ENCODE measurements at regions of chr14 and their contacts with region 1.

Region 1: GRCh38 chr14:91228112-91229004 is 16.1 kb downstream of the GPR68 start:
- DNase-seq: peak; percentile 97
- H3K4me3 Mint-ChIP-seq: peak overlapping the region; percentile 58
- H3K27ac Mint-ChIP-seq: peak overlapping the region; percentile 99
- H3K4me1 Mint-ChIP-seq: peaks cover 89% of the 10 kb centered on the region
- H3K27me3 Mint-ChIP-seq: no peaks in the 10 kb centered on the region

Region 2: GRCh38 chr14:90399541-90400444 is 828.6 kb before region 1 on chr14:
- CTCF ChIA-PET with region 1: no interaction called
- intact Hi-C with region 1: loop called (anchors 5 kb)
- DNase-seq: peak; percentile 93
- H3K4me3 Mint-ChIP-seq: peak overlapping the region; percentile 96
- H3K27ac Mint-ChIP-seq: peak overlapping the region; percentile 97
- H3K4me1 Mint-ChIP-seq: peaks cover 52% of the 10 kb centered on the region
- H3K27me3 Mint-ChIP-seq: no peaks in the 10 kb centered on the region

Region 3: DNA sequence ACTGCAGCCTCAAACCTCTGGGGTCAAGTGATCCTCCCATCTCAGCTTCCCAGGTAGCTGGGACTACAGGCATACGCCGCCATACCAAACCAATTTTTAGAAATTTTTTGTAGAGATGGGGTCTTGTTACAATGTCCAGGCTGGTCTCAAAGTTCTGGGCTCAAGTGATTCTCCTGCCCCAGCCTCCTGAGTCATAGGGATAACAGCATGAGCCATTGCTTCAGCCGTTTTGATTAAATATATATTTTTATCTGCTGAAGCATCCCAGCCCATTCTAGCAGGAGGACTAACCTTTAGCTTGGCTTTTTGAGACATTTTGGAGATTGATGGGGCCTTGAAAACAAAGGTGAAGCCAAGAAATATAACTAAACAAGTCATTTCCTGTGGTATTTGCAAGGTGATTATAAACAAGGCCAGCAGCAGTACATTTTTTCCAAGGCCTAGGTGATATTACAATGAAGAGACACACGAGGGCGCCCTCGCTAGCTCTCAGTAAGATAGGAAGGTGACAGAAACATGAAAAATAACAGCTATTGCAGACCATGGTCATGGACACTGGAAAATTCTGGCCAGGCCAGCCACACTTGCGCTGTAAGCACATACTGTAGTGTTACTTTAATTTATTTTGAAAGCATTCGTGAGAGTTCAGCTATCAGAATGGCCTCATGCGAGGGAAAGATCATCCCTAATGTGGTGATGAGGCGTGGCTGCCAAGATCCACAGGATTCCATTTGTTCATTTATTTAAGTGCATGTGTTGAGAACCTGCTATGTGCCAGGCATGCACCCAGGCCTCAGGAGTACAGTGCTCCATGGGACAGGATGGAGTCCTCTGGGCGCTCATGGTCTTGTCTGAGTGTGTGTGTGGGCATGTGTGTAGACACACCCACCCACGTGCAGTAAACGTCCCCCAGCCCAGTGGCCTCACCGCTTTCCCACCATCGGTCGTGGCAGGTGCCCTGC is 51.0 kb before region 1 on chr14:
- CTCF ChIA-PET with region 1: interaction called, 9 read pairs
- intact Hi-C with region 1: loop called (anchors 1 kb)
- DNase-seq: peak; percentile 84
- H3K4me3 Mint-ChIP-seq: no peak overlapping the region
- H3K27ac Mint-ChIP-seq: peak overlapping the region; percentile 58
- H3K4me1 Mint-ChIP-seq: peaks cover 9% of the 10 kb centered on the region
- H3K27me3 Mint-ChIP-seq: no peaks in the 10 kb centered on the region

Region 4: GRCh38 chr14:91264151-91265150 is 36.1 kb after region 1 on chr14:
- CTCF ChIA-PET with region 1: interaction called, 4 read pairs
- intact Hi-C with region 1: loop called (anchors 5 kb)
- DNase-seq: no peak
- H3K4me3 Mint-ChIP-seq: peak overlapping the region; percentile 51
- H3K27ac Mint-ChIP-seq: no peak overlapping the region
- H3K4me1 Mint-ChIP-seq: peaks cover 50% of the 10 kb centered on the region
- H3K27me3 Mint-ChIP-seq: no peaks in the 10 kb centered on the region

Region 5: DNA sequence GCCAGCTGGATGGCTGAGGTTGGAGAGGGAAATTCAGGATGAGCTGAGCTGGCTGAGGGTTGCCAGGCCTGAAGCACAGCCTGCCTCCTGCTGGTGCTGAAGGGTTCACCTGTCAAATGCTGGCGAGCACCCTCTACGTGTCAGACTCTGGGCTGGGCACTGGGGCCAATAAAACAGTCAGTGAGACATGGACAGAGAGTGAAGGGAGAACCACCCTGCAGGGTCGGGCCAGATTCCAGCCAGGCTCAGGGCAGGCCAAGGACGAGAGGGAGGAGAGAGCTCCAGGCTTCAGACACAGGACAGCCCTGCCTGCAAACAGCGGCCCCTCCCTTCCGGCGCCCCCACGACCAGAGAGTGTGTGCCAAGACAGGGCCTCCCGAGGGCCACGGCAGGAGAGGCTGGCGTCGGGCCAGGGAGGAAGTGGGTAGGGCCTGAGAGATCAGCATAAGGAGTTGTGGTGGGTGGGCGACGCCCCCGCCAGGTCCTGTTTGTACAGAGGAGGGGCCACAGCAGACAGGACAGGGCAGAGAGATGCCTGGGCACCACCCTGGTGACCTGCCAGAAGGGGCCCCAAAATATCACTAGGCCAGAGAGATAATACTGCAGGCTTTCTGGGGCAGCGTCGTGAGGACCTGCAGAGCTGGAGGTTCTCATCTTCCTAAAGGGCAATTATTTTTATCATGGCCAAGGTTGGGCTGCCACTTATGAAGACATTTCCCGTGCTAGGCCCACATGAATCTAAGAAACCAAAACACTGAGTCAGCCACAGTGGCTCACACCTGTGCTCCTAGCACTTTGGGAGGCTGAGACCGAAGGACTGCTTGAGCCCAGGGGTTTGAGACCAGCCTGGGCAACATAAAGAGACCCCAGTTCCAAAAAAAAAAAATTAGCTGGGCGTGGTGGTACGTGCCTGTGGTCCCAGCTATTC is 89.3 kb after region 1 on chr14:
- CTCF ChIA-PET with region 1: no interaction called
- intact Hi-C with region 1: loop called (anchors 1 kb)
- DNase-seq: peak; percentile 87
- H3K4me3 Mint-ChIP-seq: peak overlapping the region; percentile 60
- H3K27ac Mint-ChIP-seq: peak overlapping the region; percentile 95
- H3K4me1 Mint-ChIP-seq: peaks cover 72% of the 10 kb centered on the region
- H3K27me3 Mint-ChIP-seq: no peaks in the 10 kb centered on the region

Region 6: DNA sequence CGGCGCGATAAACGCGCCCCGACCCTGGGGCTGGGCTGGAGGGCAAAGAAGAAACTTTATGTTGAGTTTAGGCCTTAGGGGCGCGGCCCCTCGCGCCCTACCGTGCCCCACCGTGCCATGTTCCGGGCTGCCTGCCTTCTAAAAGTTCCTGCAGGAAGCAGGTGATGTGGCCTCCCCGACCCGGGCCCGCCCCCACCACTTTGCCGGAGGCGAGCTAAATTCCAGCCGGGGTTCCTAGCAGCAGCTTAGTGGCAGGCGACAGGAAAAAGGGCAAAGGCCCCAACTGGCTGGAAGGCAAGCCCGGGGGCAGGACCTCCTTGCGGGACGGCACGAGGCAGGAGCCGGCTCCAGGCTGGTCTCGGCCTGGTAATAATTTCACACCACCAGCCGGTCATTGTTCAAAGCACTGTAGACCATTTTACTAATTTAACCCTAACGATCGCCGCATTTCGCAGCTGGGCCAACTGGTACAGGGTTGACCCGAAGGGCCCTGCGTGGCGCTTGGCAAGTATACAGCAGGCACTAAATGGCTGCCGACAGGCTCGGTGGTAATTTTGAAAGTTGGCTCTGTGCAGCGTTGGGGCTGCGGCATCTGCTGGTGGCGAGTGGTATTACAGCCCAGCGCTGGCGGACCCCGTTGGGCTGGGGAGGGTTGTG is 190.2 kb after region 1 on chr14:
- CTCF ChIA-PET with region 1: no interaction called
- intact Hi-C with region 1: loop called (anchors 1 kb)
- DNase-seq: peak; percentile 84
- H3K4me3 Mint-ChIP-seq: peak overlapping the region; percentile 64
- H3K27ac Mint-ChIP-seq: peak overlapping the region; percentile 74
- H3K4me1 Mint-ChIP-seq: peaks cover 32% of the 10 kb centered on the region
- H3K27me3 Mint-ChIP-seq: no peaks in the 10 kb centered on the region